H1 (cell line): ENCODE measurements at regions of chr6 and their contacts with region 1.

Region 1: GRCh38 chr6:134640975-134641429 is 308.9 kb downstream of the ALDH8A1 start:
- DNase-seq: peak; percentile 9 to 74
- H3K4me3 ChIP-seq: no peak overlapping the region
- H3K27ac ChIP-seq: no peak overlapping the region
- H3K4me1 ChIP-seq: peaks cover 0 to 6% (median 0%) of the 10 kb centered on the region in 4 experiments; a peak in 3 of 7 replicates
- H3K27me3 ChIP-seq: no peaks in the 10 kb centered on the region
- CTCF ChIP-seq: peak in 2 of 3 experiments; percentile 73 to 91; a peak in 3 of 4 replicates
- EP300 ChIP-seq: no peak
- POLR2A ChIP-seq: no peak
- RAD21 ChIP-seq: peak; percentile 86 to 90

Region 2: GRCh38 chr6:134166511-134167261 is 474.3 kb before region 1 on chr6:
- CTCF ChIA-PET with region 1: interaction called, 12 read pairs
- POLR2A ChIA-PET with region 1: no interaction called
- DNase-seq: no peak
- H3K4me3 ChIP-seq: no peak overlapping the region
- H3K27ac ChIP-seq: no peak overlapping the region
- H3K4me1 ChIP-seq: no peaks in the 10 kb centered on the region
- H3K27me3 ChIP-seq: no peaks in the 10 kb centered on the region
- CTCF ChIP-seq: no peak
- EP300 ChIP-seq: no peak
- POLR2A ChIP-seq: no peak
- RAD21 ChIP-seq: no peak

Region 3: GRCh38 chr6:134588267-134588666 is 52.7 kb before region 1 on chr6:
- CTCF ChIA-PET with region 1: interaction called, 10 read pairs
- POLR2A ChIA-PET with region 1: no interaction called
- DNase-seq: no peak
- H3K4me3 ChIP-seq: no peak overlapping the region
- H3K27ac ChIP-seq: no peak overlapping the region
- H3K4me1 ChIP-seq: peaks cover 0 to 2% (median 0%) of the 10 kb centered on the region in 4 experiments; a peak in 1 of 7 replicates
- H3K27me3 ChIP-seq: no peaks in the 10 kb centered on the region
- CTCF ChIP-seq: no peak
- EP300 ChIP-seq: no peak
- POLR2A ChIP-seq: no peak
- RAD21 ChIP-seq: no peak

Region 4: GRCh38 chr6:134628154-134628553 is 12.8 kb before region 1 on chr6:
- CTCF ChIA-PET with region 1: interaction called, 34 read pairs
- POLR2A ChIA-PET with region 1: no interaction called
- DNase-seq: no peak
- H3K4me3 ChIP-seq: no peak overlapping the region
- H3K27ac ChIP-seq: no peak overlapping the region
- H3K4me1 ChIP-seq: no peaks in the 10 kb centered on the region; a peak in 1 of 7 replicates
- H3K27me3 ChIP-seq: no peaks in the 10 kb centered on the region
- CTCF ChIP-seq: no peak
- EP300 ChIP-seq: no peak
- POLR2A ChIP-seq: no peak
- RAD21 ChIP-seq: no peak

Region 5: DNA sequence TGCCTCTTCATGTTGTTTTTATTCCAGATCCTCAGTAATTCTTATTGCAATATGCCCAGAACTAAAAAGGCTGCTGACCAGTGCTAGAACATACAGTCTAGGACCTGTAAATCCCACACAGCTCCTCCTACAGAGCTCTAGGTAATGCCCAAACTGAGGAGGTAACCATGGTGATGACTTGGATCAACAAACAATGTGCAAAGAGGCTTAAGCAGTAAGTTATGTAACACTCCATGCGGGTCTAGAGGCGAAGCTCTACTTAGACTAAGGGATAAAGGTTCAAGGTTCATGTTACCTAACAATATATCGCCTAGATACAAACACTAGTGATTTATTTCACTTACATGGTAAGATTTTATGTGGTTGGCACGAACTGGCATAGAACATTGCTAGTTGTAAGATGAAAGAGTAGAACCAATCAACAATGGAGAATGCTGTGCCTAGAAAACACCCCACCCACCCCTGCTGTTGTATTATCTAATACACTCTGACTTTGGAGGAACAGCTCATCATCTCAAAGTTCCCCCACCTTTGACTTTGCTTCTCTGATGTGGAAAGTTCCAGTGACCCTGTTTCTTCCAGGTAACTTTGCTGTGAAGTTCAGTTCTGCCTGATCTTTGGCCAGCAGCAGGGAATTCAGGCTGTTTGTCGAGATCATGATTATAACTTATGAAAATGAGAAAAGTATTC is 66.5 kb after region 1 on chr6:
- CTCF ChIA-PET with region 1: interaction called, 14 read pairs
- POLR2A ChIA-PET with region 1: no interaction called
- DNase-seq: no peak
- H3K4me3 ChIP-seq: no peak overlapping the region
- H3K27ac ChIP-seq: no peak overlapping the region
- H3K4me1 ChIP-seq: no peaks in the 10 kb centered on the region; a peak in 1 of 7 replicates
- H3K27me3 ChIP-seq: no peaks in the 10 kb centered on the region
- CTCF ChIP-seq: no peak
- EP300 ChIP-seq: no peak
- POLR2A ChIP-seq: no peak
- RAD21 ChIP-seq: no peak

Region 6: GRCh38 chr6:135002229-135002844 is 361.3 kb after region 1 on chr6:
- CTCF ChIA-PET with region 1: no interaction called
- POLR2A ChIA-PET with region 1: no interaction called
- DNase-seq: no peak
- H3K4me3 ChIP-seq: no peak overlapping the region
- H3K27ac ChIP-seq: no peak overlapping the region
- H3K4me1 ChIP-seq: no peaks in the 10 kb centered on the region
- H3K27me3 ChIP-seq: no peaks in the 10 kb centered on the region
- CTCF ChIP-seq: peak in 1 of 3 experiments; percentile 31; a peak in 1 of 4 replicates
- EP300 ChIP-seq: no peak
- POLR2A ChIP-seq: no peak
- RAD21 ChIP-seq: peak; percentile 18 to 35; a peak in 3 of 4 replicates